ENCODE measurements at regions of chr12 and their contacts with region 1.

Region 1: GRCh38 chr12:38316391-38317129 is at the start of gene ALG10B:
- DNase-seq: peak; percentile 94
- H3K4me3 ChIP-seq: peak within 1 kb of the TSS; percentile 70
- H3K27ac ChIP-seq: peak within 1 kb of the TSS; percentile 79
- H3K4me1 ChIP-seq: no peaks in the 10 kb centered on the region
- H3K27me3 ChIP-seq: no peaks in the 10 kb centered on the region
- CTCF ChIP-seq: peak; percentile 63
- total RNA-seq, gene ALG10B: 3.6 to 5.6 TPM

Region 2: DNA sequence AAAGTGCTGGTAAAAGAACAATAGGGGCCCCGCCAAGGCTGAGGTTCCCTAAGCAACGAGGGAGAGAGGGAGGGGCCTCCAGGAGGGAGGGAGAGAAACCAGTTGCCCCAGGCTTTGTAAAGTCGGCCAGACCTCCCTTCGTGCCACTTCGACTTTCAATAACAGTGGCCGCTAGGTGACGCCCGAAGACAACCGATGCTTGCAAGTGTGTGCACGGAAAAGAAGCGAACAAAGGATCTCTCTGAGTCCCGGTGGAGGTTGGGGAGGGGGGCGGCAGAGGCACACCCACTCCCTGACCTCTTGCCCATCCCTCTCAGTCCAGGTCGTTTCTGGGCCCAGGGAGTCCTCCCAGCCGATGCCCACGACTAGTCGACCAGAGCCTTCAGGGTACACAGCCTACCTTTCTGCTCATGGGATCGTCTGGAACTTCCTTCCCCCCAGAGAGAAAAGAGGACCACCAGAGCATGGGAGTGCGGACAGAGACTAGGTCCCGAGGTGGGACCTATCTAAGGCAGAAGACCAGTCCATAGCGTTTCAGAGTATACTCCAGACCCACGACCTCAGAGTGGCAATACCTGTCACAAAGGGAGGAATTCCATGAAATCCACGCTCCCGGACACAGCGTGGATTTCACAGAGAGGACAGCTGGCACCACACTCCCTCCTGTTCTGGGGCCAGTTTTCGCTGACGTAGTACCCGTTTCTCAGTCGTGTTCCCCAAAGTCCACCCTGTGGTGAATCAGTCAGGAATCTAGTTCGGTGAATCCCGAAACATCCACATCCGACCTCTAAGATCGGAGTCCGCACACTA is 262.7 kb before region 1 on chr12:
- intact Hi-C with region 1: loop called (anchors 10 kb)
- DNase-seq: peak; percentile 48
- H3K4me3 ChIP-seq: no peak overlapping the region
- H3K27ac ChIP-seq: no peak overlapping the region
- H3K4me1 ChIP-seq: no peaks in the 10 kb centered on the region
- H3K27me3 ChIP-seq: no peaks in the 10 kb centered on the region
- CTCF ChIP-seq: peak; percentile 24

Region 3: GRCh38 chr12:38138225-38139221 is 178.0 kb before region 1 on chr12:
- intact Hi-C with region 1: loop called (anchors 5 kb)
- DNase-seq: peak; percentile 79
- H3K4me3 ChIP-seq: peak overlapping the region; percentile 37
- H3K27ac ChIP-seq: no peak overlapping the region
- H3K4me1 ChIP-seq: peaks cover 4% of the 10 kb centered on the region
- H3K27me3 ChIP-seq: no peaks in the 10 kb centered on the region
- CTCF ChIP-seq: peak; percentile 97

Region 4: DNA sequence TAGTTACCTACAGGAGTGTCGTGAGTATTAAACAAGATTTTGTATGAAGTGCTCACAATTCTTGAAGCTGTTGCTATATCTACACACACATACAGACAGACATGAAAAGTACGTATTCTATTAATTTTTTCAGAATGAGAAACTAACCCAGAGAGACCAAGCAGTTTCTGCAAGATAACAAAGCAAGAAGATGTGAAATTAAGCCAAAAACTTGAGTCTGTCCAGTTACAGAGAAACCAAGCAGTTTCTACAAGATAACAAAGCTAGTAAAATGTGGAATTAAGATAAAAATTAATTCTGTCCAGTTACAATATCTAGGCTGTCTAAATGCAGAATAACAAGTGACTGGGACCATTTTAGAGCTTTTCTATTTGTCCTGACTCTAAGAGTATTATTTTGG is 132.4 kb after region 1 on chr12:
- intact Hi-C with region 1: no loop called
- DNase-seq: no peak
- H3K4me3 ChIP-seq: no peak overlapping the region
- H3K27ac ChIP-seq: no peak overlapping the region
- H3K4me1 ChIP-seq: no peaks in the 10 kb centered on the region
- H3K27me3 ChIP-seq: no peaks in the 10 kb centered on the region
- CTCF ChIP-seq: no peak

Region 5: DNA sequence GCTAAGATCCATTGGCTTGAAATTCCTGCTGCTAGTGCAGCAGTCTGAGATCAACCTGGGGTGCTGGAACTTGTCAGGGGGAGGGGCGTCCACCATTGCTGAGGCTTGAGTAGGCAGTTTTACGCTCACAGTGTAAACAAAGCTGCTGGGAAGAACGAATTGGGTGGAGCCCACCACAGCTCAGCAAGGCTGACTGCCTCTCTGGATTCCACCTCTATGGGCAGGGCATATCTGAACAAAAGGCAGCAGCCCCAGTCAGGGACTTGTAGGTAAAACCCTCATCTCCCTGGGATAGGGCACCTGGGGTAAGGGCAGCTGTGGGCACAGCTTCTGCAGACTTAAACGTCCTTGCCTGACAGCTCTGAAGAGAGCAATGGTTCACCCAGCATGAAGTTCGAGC is 191.7 kb after region 1 on chr12:
- intact Hi-C with region 1: no loop called
- DNase-seq: no peak
- H3K4me3 ChIP-seq: no peak overlapping the region
- H3K27ac ChIP-seq: no peak overlapping the region
- H3K4me1 ChIP-seq: no peaks in the 10 kb centered on the region
- H3K27me3 ChIP-seq: no peaks in the 10 kb centered on the region
- CTCF ChIP-seq: no peak